Natural killer cell (primary cell): ENCODE measurements at regions of chr5 and their contacts with region 1.

Region 1: DNA sequence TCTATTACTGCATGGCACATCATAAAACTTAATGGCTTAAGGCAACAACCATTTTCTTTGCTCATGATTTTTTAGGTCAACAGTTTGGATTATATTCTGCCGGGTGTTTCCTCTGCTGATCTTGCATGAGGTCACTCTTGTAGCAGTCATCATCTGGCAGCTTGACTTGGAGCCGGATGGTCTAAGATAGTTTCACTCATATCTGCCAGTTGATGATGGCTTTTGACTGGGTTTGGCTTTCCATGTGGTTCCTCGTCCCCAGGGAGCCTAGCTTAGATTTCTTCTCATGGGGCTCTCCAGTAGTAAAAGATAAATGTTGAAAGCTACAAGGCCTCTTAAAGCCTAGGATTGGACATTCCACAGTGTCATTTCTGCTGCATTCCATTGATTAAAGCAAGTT is 27.4 kb downstream of the LNPEP start:
- DNase-seq: peak in 1 of 2 donors; percentile 54
- ATAC-seq: peak; percentile 69 to 77 (median 70)
- H3K4me3 ChIP-seq: no peak overlapping the region
- H3K4me3 Mint-ChIP-seq: peak overlapping the region; percentile 76
- H3K27ac ChIP-seq: peak overlapping the region; percentile 36
- H3K27ac Mint-ChIP-seq: peak overlapping the region; percentile 85 to 94
- H3K4me1 ChIP-seq: peaks cover 33% of the 10 kb centered on the region
- H3K4me1 Mint-ChIP-seq: peaks cover 61 to 70% of the 10 kb centered on the region in 2 donors
- H3K27me3 ChIP-seq: no peaks in the 10 kb centered on the region
- H3K27me3 Mint-ChIP-seq: no peaks in the 10 kb centered on the region
- CTCF ChIP-seq: no peak

Region 2: GRCh38 chr5:96885518-96886338 is 77.5 kb before region 1 on chr5:
- intact Hi-C with region 1: loop called (anchors 2 kb)
- DNase-seq: peak in 1 of 2 donors; percentile 73
- ATAC-seq: peak; percentile 69 to 86 (median 71)
- H3K4me3 ChIP-seq: no peak overlapping the region
- H3K4me3 Mint-ChIP-seq: peak overlapping the region; percentile 67
- H3K27ac ChIP-seq: peak overlapping the region; percentile 76
- H3K27ac Mint-ChIP-seq: peak overlapping the region; percentile 88 to 89
- H3K4me1 ChIP-seq: peaks cover 38% of the 10 kb centered on the region
- H3K4me1 Mint-ChIP-seq: peaks cover 49 to 62% of the 10 kb centered on the region in 2 donors
- H3K27me3 ChIP-seq: no peaks in the 10 kb centered on the region
- H3K27me3 Mint-ChIP-seq: no peaks in the 10 kb centered on the region
- CTCF ChIP-seq: no peak

Region 3: GRCh38 chr5:96942911-96943310 is 20.4 kb before region 1 on chr5:
- intact Hi-C with region 1: loop called (anchors 1 kb)
- DNase-seq: no peak
- ATAC-seq: no peak
- H3K4me3 ChIP-seq: no peak overlapping the region
- H3K4me3 Mint-ChIP-seq: peak overlapping the region; percentile 38
- H3K27ac ChIP-seq: no peak overlapping the region
- H3K27ac Mint-ChIP-seq: peak overlapping the region; percentile 81 to 92
- H3K4me1 ChIP-seq: peaks cover 35% of the 10 kb centered on the region
- H3K4me1 Mint-ChIP-seq: peaks cover 81 to 82% of the 10 kb centered on the region in 2 donors
- H3K27me3 ChIP-seq: no peaks in the 10 kb centered on the region
- H3K27me3 Mint-ChIP-seq: no peaks in the 10 kb centered on the region
- CTCF ChIP-seq: no peak

Region 4: GRCh38 chr5:97714424-97714823 is 751.2 kb after region 1 on chr5:
- intact Hi-C with region 1: no loop called
- DNase-seq: no peak
- ATAC-seq: no peak
- H3K4me3 ChIP-seq: no peak overlapping the region
- H3K4me3 Mint-ChIP-seq: no peak overlapping the region
- H3K27ac ChIP-seq: no peak overlapping the region
- H3K27ac Mint-ChIP-seq: no peak overlapping the region
- H3K4me1 ChIP-seq: no peaks in the 10 kb centered on the region
- H3K4me1 Mint-ChIP-seq: no peaks in the 10 kb centered on the region
- H3K27me3 ChIP-seq: no peaks in the 10 kb centered on the region
- H3K27me3 Mint-ChIP-seq: no peaks in the 10 kb centered on the region
- CTCF ChIP-seq: no peak